MCF 10A (cell line): ENCODE measurements at regions of chr19 and their contacts with region 1.

Region 1: DNA sequence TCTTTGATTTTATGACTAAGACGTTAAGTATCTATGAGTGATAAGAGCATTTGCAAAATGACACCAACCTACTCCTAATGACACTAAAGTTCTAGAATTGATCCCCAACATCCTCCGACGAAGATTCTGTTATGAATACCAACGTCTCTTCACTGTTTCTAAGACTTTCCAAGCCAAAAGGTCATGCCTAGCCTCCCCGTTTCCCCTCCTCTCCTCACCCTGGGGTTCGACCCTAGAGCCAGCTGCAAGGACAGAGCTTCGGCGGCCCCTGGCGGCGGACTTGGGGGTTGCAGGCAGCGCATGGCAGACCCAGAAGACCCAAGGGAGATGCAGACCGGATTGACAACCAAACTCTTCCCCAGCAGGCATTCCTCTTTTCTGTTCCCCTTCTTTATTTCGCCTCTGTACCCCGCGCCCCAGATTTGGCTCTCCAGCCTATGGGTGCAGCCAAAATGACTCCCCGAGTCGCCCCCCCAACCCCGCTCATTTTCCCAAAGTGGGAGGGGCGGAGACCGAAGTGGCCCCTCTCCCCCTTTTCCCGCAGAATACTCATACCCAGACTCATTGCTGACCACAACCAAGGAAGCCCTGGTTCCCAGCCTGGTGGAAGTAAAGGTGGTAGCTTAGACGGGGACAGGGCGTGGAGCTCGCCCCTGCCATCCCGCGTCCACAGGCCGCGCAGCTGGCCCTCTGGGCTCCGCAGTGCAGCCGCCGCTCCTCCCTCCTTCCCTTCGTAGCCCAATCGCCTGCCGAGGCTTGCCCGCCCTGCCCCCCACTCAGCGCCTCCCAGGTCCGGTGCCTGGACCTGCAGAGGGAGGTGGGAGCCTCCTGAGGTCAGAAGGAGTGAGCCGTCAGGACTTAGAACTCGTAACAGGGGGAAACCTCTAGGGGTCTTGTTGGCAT is 4.1 kb upstream of the EML2 start:
- DNase-seq: peak; percentile 87
- H3K4me3 Mint-ChIP-seq: peak overlapping the region; percentile 41
- H3K27ac Mint-ChIP-seq: peak overlapping the region; percentile 90
- H3K4me1 Mint-ChIP-seq: peaks cover 31% of the 10 kb centered on the region
- H3K27me3 Mint-ChIP-seq: no peaks in the 10 kb centered on the region
- CTCF ChIP-seq: peak; percentile 99

Region 2: GRCh38 chr19:45496349-45496953 is 146.8 kb before region 1 on chr19:
- CTCF ChIA-PET with region 1: interaction called, 7 read pairs
- POLR2A ChIA-PET with region 1: interaction called, 13 read pairs
- intact Hi-C with region 1: loop called (anchors 1 kb)
- DNase-seq: no peak
- H3K4me3 Mint-ChIP-seq: peak overlapping the region; percentile 75
- H3K27ac Mint-ChIP-seq: peak overlapping the region; percentile 24
- H3K4me1 Mint-ChIP-seq: peaks cover 13% of the 10 kb centered on the region
- H3K27me3 Mint-ChIP-seq: no peaks in the 10 kb centered on the region
- CTCF ChIP-seq: no peak

Region 3: GRCh38 chr19:45569619-45570421 is 73.5 kb before region 1 on chr19:
- CTCF ChIA-PET with region 1: interaction called, 10 read pairs
- POLR2A ChIA-PET with region 1: no interaction called
- intact Hi-C with region 1: loop called (anchors 2 kb)
- DNase-seq: peak; percentile 63
- H3K4me3 Mint-ChIP-seq: no peak overlapping the region
- H3K27ac Mint-ChIP-seq: peak overlapping the region; percentile 75
- H3K4me1 Mint-ChIP-seq: peaks cover 25% of the 10 kb centered on the region
- H3K27me3 Mint-ChIP-seq: no peaks in the 10 kb centered on the region
- CTCF ChIP-seq: peak; percentile 77

Region 4: DNA sequence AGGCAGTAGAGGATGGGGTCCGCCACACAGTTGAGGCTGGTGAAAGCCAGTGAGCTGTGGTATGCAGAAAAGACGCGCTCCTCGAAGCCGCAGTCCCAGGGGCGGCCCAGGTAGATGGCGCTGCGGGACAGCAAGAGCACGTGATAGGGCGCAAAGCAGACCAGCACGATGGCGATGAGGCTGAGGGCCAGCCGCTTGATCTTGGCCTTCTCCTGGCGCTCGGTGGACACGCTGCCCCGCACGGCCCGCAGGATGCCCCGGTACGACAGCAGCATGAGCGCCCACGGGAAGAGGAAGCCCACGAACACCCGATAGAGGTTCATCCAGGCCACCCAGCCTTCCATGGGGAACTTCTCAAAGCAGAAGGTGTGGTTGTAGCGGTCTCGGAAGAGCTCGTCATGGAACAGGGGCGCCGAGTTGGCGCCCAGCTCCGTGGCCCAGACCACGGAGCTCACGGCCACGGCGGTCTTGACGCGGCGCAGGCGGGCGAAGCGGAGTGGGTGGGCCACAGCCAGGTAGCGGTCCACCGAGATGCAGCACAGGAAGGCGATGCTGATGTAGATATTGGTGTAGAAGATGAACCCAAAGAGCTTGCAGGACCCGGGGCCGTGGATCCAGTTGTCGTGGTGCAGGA is 52.2 kb before region 1 on chr19:
- CTCF ChIA-PET with region 1: interaction called, 24 read pairs
- POLR2A ChIA-PET with region 1: interaction called, 4 read pairs
- intact Hi-C with region 1: loop called (anchors 1 kb)
- DNase-seq: peak; percentile 60
- H3K4me3 Mint-ChIP-seq: no peak overlapping the region
- H3K27ac Mint-ChIP-seq: no peak overlapping the region
- H3K4me1 Mint-ChIP-seq: peaks cover 9% of the 10 kb centered on the region
- H3K27me3 Mint-ChIP-seq: peaks cover 4% of the 10 kb centered on the region
- CTCF ChIP-seq: peak; percentile 56

Region 5: GRCh38 chr19:45632468-45633196 is 10.6 kb before region 1 on chr19:
- CTCF ChIA-PET with region 1: interaction called, 21 read pairs
- POLR2A ChIA-PET with region 1: interaction called, 71 read pairs
- intact Hi-C with region 1: no loop called
- DNase-seq: peak; percentile 98
- H3K4me3 Mint-ChIP-seq: peak overlapping the region; percentile 68
- H3K27ac Mint-ChIP-seq: peak overlapping the region; percentile 98
- H3K4me1 Mint-ChIP-seq: peaks cover 11% of the 10 kb centered on the region
- H3K27me3 Mint-ChIP-seq: no peaks in the 10 kb centered on the region
- CTCF ChIP-seq: no peak